Activated naive CD8-positive, alpha-beta T cell treated with anti-CD3 and anti-CD28 coated beads, Interleukin-2, amount 10 ng/mL, durations not matched to agents 7 days and 5 days (primary cell): ENCODE measurements at regions of chr21 and their contacts with region 1.

Region 1: GRCh38 chr21:35048706-35049617 is at the start of gene RUNX1:
- DNase-seq: peak; percentile 76
- ATAC-seq: peak; percentile 68
- H3K4me3 Mint-ChIP-seq: peak within 1 kb of the TSS; percentile 69
- H3K27ac Mint-ChIP-seq: peak within 1 kb of the TSS; percentile 89
- H3K4me1 Mint-ChIP-seq: peaks cover 73% of the 10 kb centered on the region
- H3K27me3 Mint-ChIP-seq: peaks cover 21% of the 10 kb centered on the region
- total RNA-seq, gene RUNX1: 23.0 to 29.7 TPM

Region 2: GRCh38 chr21:34888569-34889319 is 160.2 kb before region 1 on chr21:
- POLR2A ChIA-PET with region 1: interaction called, 20 read pairs
- DNase-seq: peak; percentile 86
- ATAC-seq: peak; percentile 62
- H3K4me3 Mint-ChIP-seq: peak overlapping the region; percentile 93
- H3K27ac Mint-ChIP-seq: peak overlapping the region; percentile 94
- H3K4me1 Mint-ChIP-seq: peaks cover 22% of the 10 kb centered on the region
- H3K27me3 Mint-ChIP-seq: peaks cover 21% of the 10 kb centered on the region

Region 3: GRCh38 chr21:34983680-34984086 is 65.3 kb before region 1 on chr21:
- POLR2A ChIA-PET with region 1: interaction called, 14 read pairs
- DNase-seq: no peak
- ATAC-seq: peak; percentile 59
- H3K4me3 Mint-ChIP-seq: peak overlapping the region; percentile 73
- H3K27ac Mint-ChIP-seq: peak overlapping the region; percentile 77
- H3K4me1 Mint-ChIP-seq: peaks cover 55% of the 10 kb centered on the region
- H3K27me3 Mint-ChIP-seq: peaks cover 28% of the 10 kb centered on the region

Region 4: DNA sequence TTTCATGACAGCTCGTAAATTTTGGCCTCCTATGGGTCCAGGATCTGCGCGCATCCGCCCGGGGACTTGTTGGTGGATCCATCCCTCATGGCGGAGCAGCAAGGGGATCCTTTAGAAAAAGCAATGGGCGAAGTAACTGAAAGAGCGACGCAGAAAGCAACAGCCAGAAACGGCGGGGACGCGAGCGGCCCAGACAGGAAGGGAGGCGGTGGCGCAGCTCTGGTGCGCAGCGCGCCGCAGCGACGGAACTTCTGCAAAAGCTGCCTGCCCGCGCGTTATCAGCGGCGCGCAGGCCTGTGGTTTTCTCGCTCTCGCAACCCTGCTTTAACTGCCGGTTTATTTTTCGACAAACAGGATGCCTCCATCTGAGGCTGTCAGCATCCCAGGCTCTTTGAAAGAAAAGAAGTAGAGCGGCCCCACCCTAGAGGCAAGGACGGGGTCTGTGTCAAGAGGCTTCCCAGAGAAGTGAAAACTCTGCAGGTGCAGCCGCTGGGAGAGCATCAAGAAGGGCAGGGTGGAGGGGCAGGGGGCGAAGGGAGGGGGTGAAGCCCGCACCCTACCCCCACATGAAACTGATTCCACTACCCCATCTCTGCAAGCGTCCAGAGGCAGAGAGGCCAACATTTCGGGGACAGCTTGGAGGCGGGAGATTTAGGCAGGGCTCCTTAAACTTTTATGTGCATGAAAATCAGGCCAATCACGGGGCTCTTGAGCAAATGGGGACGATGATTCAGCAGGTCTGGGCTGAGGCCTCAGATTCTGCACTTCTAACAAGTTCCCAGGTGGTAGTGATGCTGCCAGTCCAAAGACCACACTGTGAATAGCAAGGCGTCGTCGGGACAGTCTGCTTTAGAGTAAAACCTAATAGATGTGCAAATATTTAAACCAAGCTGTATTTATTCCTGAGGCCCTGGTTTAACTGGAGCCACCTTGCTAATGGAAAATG is 22.1 kb before region 1 on chr21:
- POLR2A ChIA-PET with region 1: interaction called, 39 read pairs
- DNase-seq: peak; percentile 87
- ATAC-seq: peak; percentile 95
- H3K4me3 Mint-ChIP-seq: peak overlapping the region; percentile 89
- H3K27ac Mint-ChIP-seq: peak overlapping the region; percentile 99
- H3K4me1 Mint-ChIP-seq: peaks cover 59% of the 10 kb centered on the region
- H3K27me3 Mint-ChIP-seq: no peaks in the 10 kb centered on the region